H1 (cell line): ENCODE measurements at regions of chr12 and their contacts with region 1.

Region 1: DNA sequence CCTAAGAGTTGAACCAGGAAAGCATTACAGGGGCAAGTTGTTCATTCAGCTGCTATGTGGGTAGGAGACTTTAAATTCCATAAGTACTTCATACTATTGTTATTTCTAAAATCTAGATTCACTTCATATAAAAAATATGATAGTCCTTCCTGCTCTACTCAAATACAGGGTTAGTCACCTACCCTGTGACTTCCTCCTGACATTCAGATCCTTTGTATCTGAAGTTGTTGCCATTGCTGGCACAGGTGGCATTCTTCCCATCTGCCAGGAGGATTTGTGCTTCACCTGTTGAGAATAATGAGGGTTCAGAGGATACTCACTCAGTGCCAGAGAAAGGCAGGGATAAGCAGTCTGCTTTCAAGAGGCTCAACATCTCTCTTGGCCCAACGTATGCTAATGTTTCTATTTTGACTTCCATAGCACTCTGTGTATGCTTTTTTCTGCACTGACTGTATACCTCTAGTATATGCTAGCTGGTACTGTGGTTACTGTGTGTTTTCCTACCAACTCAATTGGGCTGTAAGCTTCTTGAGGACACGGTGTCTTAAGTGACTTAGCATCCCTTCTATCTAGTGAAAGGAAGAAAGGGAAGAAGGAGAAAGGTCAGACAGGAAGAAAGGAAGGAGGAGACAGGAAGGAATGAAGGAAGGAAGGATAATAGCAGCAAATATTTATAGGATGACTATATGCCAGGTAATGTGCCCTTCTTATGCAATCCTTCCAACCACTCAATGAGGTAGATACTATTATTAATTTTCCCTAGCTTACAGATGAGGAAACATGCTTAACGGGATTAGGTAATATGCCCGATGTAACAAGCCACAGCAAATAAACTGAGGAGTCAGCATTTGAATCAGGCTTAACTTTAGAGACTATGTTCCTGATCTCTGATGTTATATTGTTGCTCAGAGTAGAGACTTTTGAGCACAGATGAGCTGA is 38.5 kb upstream of the FGF6 start:
- DNase-seq: no peak
- H3K4me3 ChIP-seq: no peak overlapping the region
- H3K27ac ChIP-seq: no peak overlapping the region
- H3K4me1 ChIP-seq: peaks cover 0 to 3% (median 1%) of the 10 kb centered on the region in 4 experiments; a peak in 4 of 7 replicates
- H3K27me3 ChIP-seq: no peaks in the 10 kb centered on the region
- CTCF ChIP-seq: no peak
- EP300 ChIP-seq: no peak
- POLR2A ChIP-seq: no peak
- RAD21 ChIP-seq: no peak

Region 2: DNA sequence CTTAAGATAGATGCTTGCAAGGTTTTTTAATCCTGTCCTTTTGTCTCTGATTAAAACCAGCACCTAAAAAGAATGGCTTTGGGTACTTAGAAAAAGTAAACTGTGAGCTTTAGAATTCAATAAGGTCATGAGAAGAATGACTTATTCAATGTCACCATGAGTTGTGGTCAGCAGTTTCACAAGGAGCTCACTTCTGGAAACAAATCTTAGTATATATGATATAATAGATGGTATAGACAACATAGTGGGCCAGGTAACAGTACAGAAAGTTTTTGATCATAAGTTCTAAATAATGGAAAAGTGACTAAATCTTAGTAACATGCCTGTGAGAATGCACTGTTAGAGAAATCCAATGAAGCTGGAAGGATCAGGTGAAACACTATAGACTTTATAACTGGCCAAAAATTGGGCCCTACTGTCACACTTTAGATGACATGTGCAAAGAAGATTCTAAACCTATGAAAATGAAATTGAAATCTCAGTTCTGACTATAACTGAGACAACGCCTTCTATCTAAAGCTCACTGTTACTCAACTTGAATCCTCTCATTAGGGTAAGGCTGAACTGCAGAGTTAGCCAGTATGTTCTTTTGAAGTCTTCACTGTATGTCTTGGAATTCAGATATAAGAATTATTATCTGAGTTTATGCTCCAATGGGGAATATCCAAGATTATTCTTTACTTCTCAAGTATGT is 12.1 kb after region 1 on chr12:
- CTCF ChIA-PET with region 1: interaction called, 10 read pairs
- POLR2A ChIA-PET with region 1: no interaction called
- DNase-seq: no peak
- H3K4me3 ChIP-seq: no peak overlapping the region
- H3K27ac ChIP-seq: no peak overlapping the region
- H3K4me1 ChIP-seq: no peaks in the 10 kb centered on the region
- H3K27me3 ChIP-seq: no peaks in the 10 kb centered on the region
- CTCF ChIP-seq: no peak
- EP300 ChIP-seq: no peak
- POLR2A ChIP-seq: no peak
- RAD21 ChIP-seq: no peak

Region 3: GRCh38 chr12:4555804-4556203 is 71.7 kb after region 1 on chr12:
- CTCF ChIA-PET with region 1: no interaction called
- POLR2A ChIA-PET with region 1: no interaction called
- DNase-seq: no peak
- H3K4me3 ChIP-seq: no peak overlapping the region
- H3K27ac ChIP-seq: no peak overlapping the region
- H3K4me1 ChIP-seq: no peaks in the 10 kb centered on the region
- H3K27me3 ChIP-seq: peaks cover 0 to 1% (median 0%) of the 10 kb centered on the region in 4 experiments; a peak in 1 of 7 replicates
- CTCF ChIP-seq: no peak
- EP300 ChIP-seq: no peak
- POLR2A ChIP-seq: no peak
- RAD21 ChIP-seq: no peak